K562 (cell line): ENCODE measurements at regions of chr5 and their contacts with region 1.

Region 1: DNA sequence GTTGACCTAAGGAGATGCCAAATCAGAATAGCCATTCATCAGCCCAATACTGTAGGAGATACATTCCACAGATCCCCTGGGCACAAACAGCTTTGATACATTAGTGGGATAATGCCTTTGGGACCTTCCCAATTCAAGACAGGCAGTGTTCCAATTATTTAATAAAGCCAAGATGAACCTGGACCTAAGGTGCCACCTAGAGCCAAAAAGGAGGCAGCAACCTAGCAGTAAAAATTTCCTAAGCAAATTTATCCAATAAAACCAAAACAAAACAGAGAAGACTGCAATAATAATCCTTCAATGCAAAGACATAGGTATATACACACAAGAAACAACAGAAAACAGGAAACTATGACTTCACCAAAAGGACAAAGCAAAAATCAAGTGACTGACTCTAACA is 253.0 kb downstream of the HINT1 start:
- DNase-seq: peak in 1 of 4 experiments; percentile 4
- ATAC-seq: no peak
- H3K4me3 ChIP-seq: no peak overlapping the region
- H3K27ac ChIP-seq: no peak overlapping the region
- H3K4me1 ChIP-seq: no peaks in the 10 kb centered on the region
- H3K27me3 ChIP-seq: no peaks in the 10 kb centered on the region
- CTCF ChIP-seq: peak; percentile 29 to 63 (median 34); a peak in 4 of 6 replicates
- EP300 ChIP-seq: no peak
- POLR2A ChIP-seq: no peak
- RAD21 ChIP-seq: peak; percentile 46 to 56; a peak in 3 of 4 replicates

Region 2: DNA sequence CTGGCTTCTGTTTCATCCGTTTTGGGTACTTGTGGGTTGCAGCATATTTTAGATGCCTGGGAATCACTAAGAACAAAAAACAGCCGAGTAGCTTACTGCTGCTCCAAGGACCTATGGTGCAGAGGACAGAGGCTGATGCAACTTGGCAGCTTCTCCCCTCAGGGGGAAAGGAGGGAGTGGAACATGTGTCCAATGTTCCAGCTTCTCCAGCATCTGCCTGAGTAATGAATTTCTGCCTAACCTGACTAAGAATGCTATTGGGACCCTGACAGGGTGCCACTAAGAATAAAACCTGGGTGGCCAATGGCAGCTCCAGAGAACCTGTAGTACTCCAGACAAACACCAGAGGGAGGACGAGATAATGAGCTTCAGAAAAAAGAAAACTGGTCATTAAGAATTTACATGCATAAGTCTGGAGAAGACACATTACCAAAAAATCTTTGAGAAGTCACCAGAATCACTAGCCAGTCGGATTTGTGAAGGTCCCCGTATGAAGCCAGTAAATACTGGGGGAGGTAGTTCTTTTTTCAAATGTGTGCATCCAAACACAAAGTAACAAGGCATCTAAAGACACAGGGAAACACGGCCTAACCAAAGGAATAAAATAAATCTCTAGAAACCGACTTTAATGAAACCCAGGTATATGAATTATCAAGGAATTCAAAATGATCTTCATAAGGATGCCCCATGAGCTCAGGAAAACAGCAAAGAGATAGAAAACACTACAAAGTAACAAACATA is 40.6 kb before region 1 on chr5:
- CTCF ChIA-PET with region 1: no interaction called
- POLR2A ChIA-PET with region 1: no interaction called
- in situ Hi-C with region 1: no loop called
- intact Hi-C with region 1: loop called (anchors 1 kb)
- DNase-seq: peak; percentile 46 to 52 (median 48)
- ATAC-seq: peak; percentile 81
- H3K4me3 ChIP-seq: no peak overlapping the region
- H3K27ac ChIP-seq: no peak overlapping the region
- H3K4me1 ChIP-seq: no peaks in the 10 kb centered on the region
- H3K27me3 ChIP-seq: no peaks in the 10 kb centered on the region
- CTCF ChIP-seq: peak; percentile 50 to 71 (median 66)
- EP300 ChIP-seq: no peak
- POLR2A ChIP-seq: no peak
- RAD21 ChIP-seq: peak; percentile 53 to 76

Region 3: DNA sequence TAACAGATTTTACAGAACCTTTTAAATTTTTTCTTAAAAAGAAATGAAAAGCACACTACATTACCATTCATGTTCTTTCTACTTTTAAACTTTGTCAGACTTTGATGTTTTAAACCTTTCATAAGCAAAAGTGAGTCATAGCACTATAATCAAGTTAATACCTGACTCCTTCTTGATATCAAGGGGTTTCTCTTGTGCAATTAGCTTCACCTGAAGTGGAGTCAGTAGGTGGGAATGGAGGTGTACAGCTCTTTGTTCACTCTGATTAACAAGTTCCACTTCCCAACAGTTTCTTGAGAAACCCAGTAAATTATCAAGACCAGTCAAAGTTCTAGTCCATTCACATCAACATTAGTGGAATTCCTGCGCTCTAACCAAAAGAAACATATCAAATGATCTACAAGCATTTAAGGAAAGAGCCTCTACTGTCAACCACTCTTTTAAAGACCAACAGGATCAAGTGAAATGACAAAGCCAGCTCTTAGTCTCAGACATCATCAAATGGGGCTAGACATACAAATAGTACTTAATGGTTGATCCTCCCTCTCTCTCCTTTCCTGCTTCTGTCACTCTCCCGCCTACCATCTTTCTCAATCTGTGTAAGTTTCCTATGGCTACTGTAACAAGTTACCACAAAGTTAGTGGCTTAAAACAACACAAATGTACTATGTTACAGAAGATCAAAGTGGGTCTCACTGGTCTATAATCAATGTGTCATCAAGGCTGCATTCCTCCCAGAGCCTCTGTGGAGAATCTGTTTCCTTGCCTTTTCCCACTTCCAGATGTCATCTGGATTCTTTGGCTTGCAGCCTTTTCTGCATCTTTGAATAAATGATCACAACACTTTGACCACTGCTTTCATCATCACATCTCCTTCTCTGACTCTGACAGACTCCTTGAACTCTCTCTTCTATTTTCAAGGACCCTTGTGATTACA is 185.0 kb after region 1 on chr5:
- CTCF ChIA-PET with region 1: no interaction called
- POLR2A ChIA-PET with region 1: no interaction called
- in situ Hi-C with region 1: no loop called
- intact Hi-C with region 1: no loop called
- DNase-seq: no peak
- ATAC-seq: no peak
- H3K4me3 ChIP-seq: no peak overlapping the region
- H3K27ac ChIP-seq: no peak overlapping the region
- H3K4me1 ChIP-seq: no peaks in the 10 kb centered on the region
- H3K27me3 ChIP-seq: no peaks in the 10 kb centered on the region
- CTCF ChIP-seq: no peak
- EP300 ChIP-seq: no peak
- POLR2A ChIP-seq: no peak
- RAD21 ChIP-seq: no peak